ENCODE measurements at regions of chr15 and their contacts with region 1.

Region 1: GRCh38 chr15:32659340-32660155 is 18.0 kb downstream of the SCG5 start:
- DNase-seq: no peak
- H3K4me3 ChIP-seq: no peak overlapping the region
- H3K27ac ChIP-seq: no peak overlapping the region
- H3K4me1 ChIP-seq: peaks cover 8% of the 10 kb centered on the region
- H3K27me3 ChIP-seq: no peaks in the 10 kb centered on the region
- CTCF ChIP-seq: no peak
- POLR2A ChIP-seq: no peak

Region 2: DNA sequence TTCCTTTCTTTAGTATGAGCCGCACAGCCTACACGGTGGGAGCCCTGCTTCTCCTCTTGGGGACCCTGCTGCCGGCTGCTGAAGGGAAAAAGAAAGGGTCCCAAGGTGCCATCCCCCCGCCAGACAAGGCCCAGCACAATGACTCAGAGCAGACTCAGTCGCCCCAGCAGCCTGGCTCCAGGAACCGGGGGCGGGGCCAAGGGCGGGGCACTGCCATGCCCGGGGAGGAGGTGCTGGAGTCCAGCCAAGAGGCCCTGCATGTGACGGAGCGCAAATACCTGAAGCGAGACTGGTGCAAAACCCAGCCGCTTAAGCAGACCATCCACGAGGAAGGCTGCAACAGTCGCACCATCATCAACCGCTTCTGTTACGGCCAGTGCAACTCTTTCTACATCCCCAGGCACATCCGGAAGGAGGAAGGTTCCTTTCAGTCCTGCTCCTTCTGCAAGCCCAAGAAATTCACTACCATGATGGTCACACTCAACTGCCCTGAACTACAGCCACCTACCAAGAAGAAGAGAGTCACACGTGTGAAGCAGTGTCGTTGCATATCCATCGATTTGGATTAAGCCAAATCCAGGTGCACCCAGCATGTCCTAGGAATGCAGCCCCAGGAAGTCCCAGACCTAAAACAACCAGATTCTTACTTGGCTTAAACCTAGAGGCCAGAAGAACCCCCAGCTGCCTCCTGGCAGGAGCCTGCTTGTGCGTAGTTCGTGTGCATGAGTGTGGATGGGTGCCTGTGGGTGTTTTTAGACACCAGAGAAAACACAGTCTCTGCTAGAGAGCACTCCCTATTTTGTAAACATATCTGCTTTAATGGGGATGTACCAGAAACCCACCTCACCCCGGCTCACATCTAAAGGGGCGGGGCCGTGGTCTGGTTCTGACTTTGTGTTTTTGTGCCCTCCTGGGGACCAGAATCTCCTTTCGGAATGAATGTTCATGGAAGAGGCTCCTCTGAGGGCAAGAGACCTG is 71.4 kb after region 1 on chr15:
- intact Hi-C with region 1: no loop called
- DNase-seq: no peak
- H3K4me3 ChIP-seq: no peak overlapping the region
- H3K27ac ChIP-seq: no peak overlapping the region
- H3K4me1 ChIP-seq: peaks cover 7% of the 10 kb centered on the region
- H3K27me3 ChIP-seq: no peaks in the 10 kb centered on the region
- CTCF ChIP-seq: no peak
- POLR2A ChIP-seq: no peak

Region 3: GRCh38 chr15:32994810-32995424 is 335.4 kb after region 1 on chr15:
- intact Hi-C with region 1: loop called (anchors 5 kb)
- DNase-seq: no peak
- H3K4me3 ChIP-seq: no peak overlapping the region
- H3K27ac ChIP-seq: no peak overlapping the region
- H3K4me1 ChIP-seq: peaks cover 7% of the 10 kb centered on the region
- H3K27me3 ChIP-seq: no peaks in the 10 kb centered on the region
- CTCF ChIP-seq: peak in 2 of 3 experiments; percentile 41 to 69
- POLR2A ChIP-seq: no peak

Measured in vagina (tissue), 2 donors.